IMR-90 (cell line): ENCODE measurements at regions of chr12 and their contacts with region 1.

Region 1: GRCh38 chr12:29545102-29545467 is 47.6 kb upstream of the OVCH1 start:
- DNase-seq: no peak
- ATAC-seq: no peak
- H3K4me3 ChIP-seq: no peak overlapping the region
- H3K27ac ChIP-seq: no peak overlapping the region
- H3K4me1 ChIP-seq: peaks cover 16% of the 10 kb centered on the region
- H3K27me3 ChIP-seq: no peaks in the 10 kb centered on the region
- CTCF ChIP-seq: no peak
- POLR2A ChIP-seq: no peak
- RAD21 ChIP-seq: no peak

Region 2: DNA sequence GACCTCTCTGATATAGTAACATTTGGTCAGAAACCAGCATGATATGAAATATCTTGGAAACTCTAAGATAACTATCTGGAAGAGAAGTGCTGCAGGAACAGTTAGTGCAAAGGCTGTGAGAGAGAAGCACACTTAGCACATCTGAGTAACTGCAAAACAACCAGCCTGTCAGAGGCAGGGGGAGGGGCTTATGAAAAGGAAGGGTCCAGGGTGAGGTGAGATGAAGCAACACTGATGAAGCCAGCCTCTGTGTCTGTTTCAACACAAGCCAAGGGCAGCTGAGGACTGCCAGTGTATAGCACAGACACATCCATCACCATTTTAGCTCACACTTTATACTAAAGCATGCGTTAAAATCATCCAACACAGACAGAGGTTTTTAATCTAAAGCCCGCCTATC is 10.2 kb before region 1 on chr12:
- CTCF ChIA-PET with region 1: interaction called, 12 read pairs
- POLR2A ChIA-PET with region 1: no interaction called
- dilution Hi-C with region 1: no loop called
- in situ Hi-C with region 1: no loop called
- intact Hi-C with region 1: no loop called
- DNase-seq: peak; percentile 26
- ATAC-seq: peak; percentile 30
- H3K4me3 ChIP-seq: no peak overlapping the region
- H3K27ac ChIP-seq: no peak overlapping the region
- H3K4me1 ChIP-seq: peaks cover 7% of the 10 kb centered on the region
- H3K27me3 ChIP-seq: no peaks in the 10 kb centered on the region
- CTCF ChIP-seq: no peak
- POLR2A ChIP-seq: no peak
- RAD21 ChIP-seq: no peak